Calu3 (cell line): ENCODE measurements at regions of chr11 and their contacts with region 1.

Region 1: DNA sequence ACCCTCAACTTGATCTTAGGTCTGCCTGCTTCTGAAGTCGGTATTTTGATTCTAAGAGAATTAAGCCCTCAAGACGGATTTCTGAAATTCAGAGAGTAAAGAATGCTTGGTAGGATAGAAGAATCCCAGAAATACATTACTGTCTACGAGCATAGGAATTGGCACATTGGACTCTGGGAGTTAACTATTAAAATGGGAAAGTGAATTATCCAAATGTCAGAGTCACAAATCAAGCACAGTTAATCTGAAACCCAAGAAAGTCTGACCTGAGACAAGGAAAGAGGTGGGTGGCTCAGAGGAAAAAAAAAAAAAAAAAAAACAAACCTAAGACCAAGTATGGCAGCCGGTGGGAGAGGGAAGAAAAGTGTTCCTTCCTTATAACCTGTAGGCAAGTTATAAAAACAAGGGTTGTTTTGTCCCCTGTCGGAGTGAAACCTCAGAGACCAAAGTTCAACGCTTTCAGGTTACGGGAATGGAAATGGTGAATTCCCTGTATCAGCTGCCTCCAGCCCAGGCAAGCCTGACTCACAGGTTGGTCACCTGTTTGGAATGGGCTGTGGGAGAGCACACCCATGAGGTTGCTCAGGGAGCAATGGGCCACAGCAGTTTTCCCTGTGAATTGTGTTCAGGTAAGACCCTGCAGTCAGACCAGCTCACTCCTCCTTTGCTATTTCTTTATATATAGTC is 139.0 kb downstream of the ETS1 start:
- DNase-seq: peak; percentile 84
- H3K4me3 Mint-ChIP-seq: no peak overlapping the region
- H3K27ac Mint-ChIP-seq: peak overlapping the region; percentile 96
- H3K4me1 Mint-ChIP-seq: peaks cover 47% of the 10 kb centered on the region
- H3K27me3 Mint-ChIP-seq: no peaks in the 10 kb centered on the region
- CTCF ChIP-seq: no peak

Region 2: GRCh38 chr11:128039140-128040021 is 409.0 kb before region 1 on chr11:
- CTCF ChIA-PET with region 1: no interaction called
- intact Hi-C with region 1: loop called (anchors 10 kb)
- DNase-seq: peak; percentile 45
- H3K4me3 Mint-ChIP-seq: no peak overlapping the region
- H3K27ac Mint-ChIP-seq: no peak overlapping the region
- H3K4me1 Mint-ChIP-seq: peaks cover 23% of the 10 kb centered on the region
- H3K27me3 Mint-ChIP-seq: no peaks in the 10 kb centered on the region
- CTCF ChIP-seq: no peak

Region 3: GRCh38 chr11:128210148-128210940 is 238.0 kb before region 1 on chr11:
- CTCF ChIA-PET with region 1: no interaction called
- intact Hi-C with region 1: loop called (anchors 1 kb)
- DNase-seq: peak; percentile 76
- H3K4me3 Mint-ChIP-seq: no peak overlapping the region
- H3K27ac Mint-ChIP-seq: peak overlapping the region; percentile 72
- H3K4me1 Mint-ChIP-seq: peaks cover 33% of the 10 kb centered on the region
- H3K27me3 Mint-ChIP-seq: no peaks in the 10 kb centered on the region
- CTCF ChIP-seq: no peak

Region 4: DNA sequence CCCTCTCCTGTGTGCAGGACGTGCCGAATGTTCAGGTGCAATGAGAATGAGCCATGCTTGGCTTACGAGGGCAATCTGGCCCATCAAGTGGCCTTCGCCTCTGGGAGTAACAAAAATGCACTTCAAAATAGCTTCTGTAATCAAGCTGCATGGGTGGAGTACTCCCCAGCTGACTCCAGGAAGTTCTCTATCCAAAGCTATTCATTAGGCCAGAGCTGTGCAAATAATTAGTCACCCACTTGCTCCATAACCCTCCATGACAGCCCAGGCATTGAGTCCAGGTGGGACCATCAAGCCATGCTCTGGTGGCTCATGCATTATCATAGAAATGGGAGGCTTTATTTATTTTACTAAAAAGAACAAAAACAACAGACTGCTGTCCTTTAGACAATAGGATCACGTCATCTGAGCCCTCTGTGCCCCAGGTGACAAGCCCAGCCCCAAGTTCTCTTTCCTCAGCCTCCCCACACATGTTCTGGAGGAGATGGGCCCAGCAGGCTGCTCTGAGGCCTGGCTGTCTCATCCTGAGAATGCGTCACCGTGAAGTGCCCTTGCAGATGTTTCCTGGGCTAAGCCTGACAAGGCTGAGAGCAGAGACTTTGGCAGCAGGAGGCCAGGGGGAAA is 105.7 kb before region 1 on chr11:
- CTCF ChIA-PET with region 1: no interaction called
- intact Hi-C with region 1: loop called (anchors 1 kb)
- DNase-seq: peak; percentile 52
- H3K4me3 Mint-ChIP-seq: no peak overlapping the region
- H3K27ac Mint-ChIP-seq: no peak overlapping the region
- H3K4me1 Mint-ChIP-seq: peaks cover 26% of the 10 kb centered on the region
- H3K27me3 Mint-ChIP-seq: no peaks in the 10 kb centered on the region
- CTCF ChIP-seq: no peak

Region 5: DNA sequence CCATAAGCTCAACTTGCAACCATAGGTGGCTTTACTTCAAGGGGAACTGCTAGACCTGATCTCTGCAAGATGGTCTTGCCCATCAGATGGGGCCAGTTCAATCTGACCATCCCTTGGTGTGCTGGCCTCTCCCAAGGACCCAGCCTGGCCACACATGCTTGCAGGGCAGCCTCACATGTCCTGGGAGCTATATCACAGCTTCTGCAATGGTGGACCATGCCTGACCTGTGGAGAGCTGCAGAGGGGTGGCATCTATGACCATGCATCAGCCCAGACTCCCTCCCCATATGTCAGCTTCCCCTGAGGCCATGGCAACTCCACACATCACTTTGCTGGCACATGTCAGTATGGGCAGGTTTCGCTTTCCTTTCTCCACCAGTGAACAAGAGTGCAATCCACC is 651.9 kb after region 1 on chr11:
- CTCF ChIA-PET with region 1: no interaction called
- intact Hi-C with region 1: no loop called
- DNase-seq: no peak
- H3K4me3 Mint-ChIP-seq: no peak overlapping the region
- H3K27ac Mint-ChIP-seq: no peak overlapping the region
- H3K4me1 Mint-ChIP-seq: no peaks in the 10 kb centered on the region
- H3K27me3 Mint-ChIP-seq: no peaks in the 10 kb centered on the region
- CTCF ChIP-seq: no peak